Endothelial cell of umbilical vein (primary cell): ENCODE measurements at regions of chr6 and their contacts with region 1.

Region 1: DNA sequence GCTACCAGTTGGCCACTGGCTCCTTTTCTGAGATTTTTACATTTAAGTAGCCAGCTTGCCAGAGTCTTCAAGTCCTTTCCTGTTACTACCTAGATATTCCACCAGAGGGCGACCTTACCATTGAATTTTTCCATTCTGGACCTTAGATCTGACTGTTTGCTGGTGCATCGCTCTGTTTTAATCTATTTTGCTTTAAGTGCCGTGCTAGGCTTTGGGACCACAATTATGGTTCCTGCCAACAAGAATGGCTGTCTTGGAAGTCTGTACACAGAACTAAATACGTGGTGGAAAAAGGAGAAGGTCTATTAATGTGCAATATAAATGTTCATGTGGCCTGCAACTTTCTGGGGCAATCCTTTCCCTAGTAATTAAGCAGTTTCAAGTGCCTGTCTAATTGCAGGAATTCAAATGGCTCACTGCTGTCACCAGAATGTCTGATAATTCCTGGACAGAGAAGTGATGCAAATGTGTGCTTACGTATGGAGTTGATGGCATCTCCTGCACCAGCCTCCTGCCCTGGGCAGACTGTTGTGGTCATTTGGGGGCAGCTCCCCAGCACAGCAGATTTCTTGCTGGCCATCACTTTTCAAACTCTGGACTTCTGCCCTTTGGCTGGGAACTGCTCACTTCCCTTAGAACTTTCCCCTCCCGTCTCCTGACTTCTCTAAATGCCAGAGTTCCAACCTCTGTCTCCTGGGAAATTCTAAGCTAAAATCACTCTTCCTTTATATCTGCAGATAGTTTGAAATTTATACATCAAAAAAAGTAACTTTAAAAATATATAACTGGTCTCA is 5.6 kb upstream of the HLA-DOA start:
- DNase-seq: peak; percentile 85
- H3K4me3 ChIP-seq: no peak overlapping the region
- H3K27ac ChIP-seq: no peak overlapping the region
- H3K4me1 ChIP-seq: peaks cover 8% of the 10 kb centered on the region
- H3K27me3 ChIP-seq: peaks cover 23 to 30% of the 10 kb centered on the region in 2 experiments
- CTCF ChIP-seq: peak; percentile 56 to 57
- POLR2A ChIP-seq: no peak

Region 2: GRCh38 chr6:33001685-33002084 is 13.4 kb before region 1 on chr6:
- CTCF ChIA-PET with region 1: interaction called, 12 read pairs
- POLR2A ChIA-PET with region 1: no interaction called
- dilution Hi-C with region 1: no loop called
- intact Hi-C with region 1: no loop called
- DNase-seq: no peak
- H3K4me3 ChIP-seq: no peak overlapping the region
- H3K27ac ChIP-seq: no peak overlapping the region
- H3K4me1 ChIP-seq: no peaks in the 10 kb centered on the region
- H3K27me3 ChIP-seq: peaks cover 10 to 34% of the 10 kb centered on the region in 2 experiments
- CTCF ChIP-seq: no peak
- POLR2A ChIP-seq: no peak

Region 3: GRCh38 chr6:33082702-33083101 is 67.7 kb after region 1 on chr6:
- CTCF ChIA-PET with region 1: interaction called, 88 read pairs
- POLR2A ChIA-PET with region 1: interaction called, 3 read pairs
- dilution Hi-C with region 1: no loop called
- intact Hi-C with region 1: loop called (anchors 2 kb)
- DNase-seq: no peak
- H3K4me3 ChIP-seq: no peak overlapping the region
- H3K27ac ChIP-seq: no peak overlapping the region
- H3K4me1 ChIP-seq: peaks cover 4% of the 10 kb centered on the region
- H3K27me3 ChIP-seq: no peaks in the 10 kb centered on the region
- CTCF ChIP-seq: peak; percentile 13 to 48
- POLR2A ChIP-seq: no peak

Region 4: GRCh38 chr6:33091957-33092356 is 76.9 kb after region 1 on chr6:
- CTCF ChIA-PET with region 1: interaction called, 11 read pairs
- POLR2A ChIA-PET with region 1: no interaction called
- dilution Hi-C with region 1: no loop called
- intact Hi-C with region 1: loop called (anchors 1 kb)
- DNase-seq: no peak
- H3K4me3 ChIP-seq: no peak overlapping the region
- H3K27ac ChIP-seq: no peak overlapping the region
- H3K4me1 ChIP-seq: no peaks in the 10 kb centered on the region
- H3K27me3 ChIP-seq: peaks cover 12 to 14% of the 10 kb centered on the region in 2 experiments
- CTCF ChIP-seq: peak; percentile 36 to 66
- POLR2A ChIP-seq: no peak

Region 5: GRCh38 chr6:33126101-33126714 is 111.2 kb after region 1 on chr6:
- CTCF ChIA-PET with region 1: interaction called, 31 read pairs
- POLR2A ChIA-PET with region 1: no interaction called
- dilution Hi-C with region 1: no loop called
- intact Hi-C with region 1: no loop called
- DNase-seq: peak; percentile 45
- H3K4me3 ChIP-seq: no peak overlapping the region
- H3K27ac ChIP-seq: no peak overlapping the region
- H3K4me1 ChIP-seq: no peaks in the 10 kb centered on the region
- H3K27me3 ChIP-seq: peaks cover 21 to 31% of the 10 kb centered on the region in 2 experiments
- CTCF ChIP-seq: peak; percentile 74 to 83
- POLR2A ChIP-seq: no peak

Region 6: GRCh38 chr6:33147807-33148666 is 133.0 kb after region 1 on chr6:
- CTCF ChIA-PET with region 1: interaction called, 12 read pairs
- POLR2A ChIA-PET with region 1: no interaction called
- dilution Hi-C with region 1: no loop called
- intact Hi-C with region 1: loop called (anchors 1 kb)
- DNase-seq: peak; percentile 49
- H3K4me3 ChIP-seq: no peak overlapping the region
- H3K27ac ChIP-seq: no peak overlapping the region
- H3K4me1 ChIP-seq: no peaks in the 10 kb centered on the region
- H3K27me3 ChIP-seq: peaks cover 10 to 27% of the 10 kb centered on the region in 2 experiments
- CTCF ChIP-seq: peak; percentile 66 to 69
- POLR2A ChIP-seq: no peak

Region 7: DNA sequence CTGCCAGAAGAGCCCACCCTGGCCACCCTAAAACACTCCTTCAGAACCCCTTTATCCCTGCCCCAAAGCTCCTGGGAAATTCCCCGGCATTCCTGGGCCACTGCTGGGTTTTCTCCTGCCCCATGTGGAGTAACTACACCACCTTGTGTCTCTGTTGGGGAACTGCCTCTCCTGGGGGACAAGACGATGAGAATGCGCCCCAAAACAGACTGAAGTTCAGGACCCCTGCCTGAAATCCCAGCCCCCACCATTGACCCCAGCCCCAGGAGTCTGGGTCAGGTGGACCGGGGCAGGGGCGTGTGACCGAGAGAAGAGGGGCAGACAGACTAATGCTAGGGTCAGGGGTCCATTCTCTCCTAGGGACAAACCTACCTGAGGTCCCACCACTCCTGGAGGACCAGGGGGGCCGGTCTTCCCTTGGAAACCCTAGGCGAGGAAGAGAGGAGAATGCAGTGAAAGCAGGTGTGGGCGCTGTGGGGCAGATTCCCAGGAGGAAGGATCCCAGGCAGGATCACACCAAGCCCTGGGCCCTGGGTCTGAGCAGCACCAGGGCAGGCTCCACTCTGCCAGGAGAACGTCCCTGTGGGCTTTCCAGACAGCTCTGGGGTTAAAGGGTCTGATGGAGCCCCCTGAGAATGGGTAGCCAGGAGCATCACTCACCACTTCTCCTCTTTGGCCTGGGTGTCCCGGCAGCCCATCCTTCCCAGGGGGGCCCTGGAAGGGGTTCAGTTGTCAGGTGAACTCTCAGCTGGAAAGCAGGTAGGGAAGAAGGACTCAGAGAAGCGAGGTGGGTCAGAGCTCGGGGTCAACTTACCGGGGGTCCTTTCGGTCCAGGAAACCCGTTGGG is 157.9 kb after region 1 on chr6:
- CTCF ChIA-PET with region 1: interaction called, 10 read pairs
- POLR2A ChIA-PET with region 1: no interaction called
- dilution Hi-C with region 1: no loop called
- intact Hi-C with region 1: no loop called
- DNase-seq: no peak
- H3K4me3 ChIP-seq: no peak overlapping the region
- H3K27ac ChIP-seq: no peak overlapping the region
- H3K4me1 ChIP-seq: no peaks in the 10 kb centered on the region
- H3K27me3 ChIP-seq: no peaks in the 10 kb centered on the region
- CTCF ChIP-seq: peak; percentile 26 to 34
- POLR2A ChIP-seq: no peak